CD8-positive, alpha-beta T cell (primary cell): ENCODE measurements at regions of chr1 and their contacts with region 1.

Region 1: DNA sequence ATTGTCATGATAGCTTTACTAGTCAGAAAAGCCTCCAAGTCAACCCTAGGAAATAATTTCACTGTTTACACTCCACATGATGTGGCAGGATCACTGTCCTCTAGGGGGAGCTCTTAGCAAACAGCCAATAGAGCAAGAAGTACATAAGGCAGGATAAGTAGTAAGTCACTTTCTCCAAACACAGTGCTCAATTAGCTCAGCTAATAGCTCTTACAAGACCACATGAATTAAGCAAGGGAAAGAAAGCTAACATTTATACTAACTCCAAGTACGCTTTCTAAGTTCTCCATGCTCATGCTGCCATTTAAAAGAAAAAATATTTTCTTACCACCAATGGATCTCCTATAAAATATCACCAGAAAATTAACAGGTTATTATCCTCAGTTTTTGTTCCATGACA is 66.9 kb upstream of the LRIF1 start:
- DNase-seq: peak in 8 of 9 experiments; percentile 37 to 74 (median 56)
- ATAC-seq: no peak
- H3K4me3 ChIP-seq: no peak overlapping the region
- H3K4me3 Mint-ChIP-seq: no peak overlapping the region
- H3K27ac ChIP-seq: no peak overlapping the region
- H3K27ac Mint-ChIP-seq: no peak overlapping the region
- H3K4me1 ChIP-seq: no peaks in the 10 kb centered on the region
- H3K4me1 Mint-ChIP-seq: no peaks in the 10 kb centered on the region
- H3K27me3 ChIP-seq: no peaks in the 10 kb centered on the region
- H3K27me3 Mint-ChIP-seq: peaks cover 9% of the 10 kb centered on the region
- CTCF ChIP-seq: peak; percentile 81

Region 2: GRCh38 chr1:111015225-111015624 is 15.4 kb before region 1 on chr1:
- CTCF ChIA-PET with region 1: interaction called, 26 read pairs
- POLR2A ChIA-PET with region 1: no interaction called
- intact Hi-C with region 1: no loop called
- DNase-seq: no peak
- ATAC-seq: no peak
- H3K4me3 ChIP-seq: no peak overlapping the region
- H3K4me3 Mint-ChIP-seq: no peak overlapping the region
- H3K27ac ChIP-seq: no peak overlapping the region
- H3K27ac Mint-ChIP-seq: no peak overlapping the region
- H3K4me1 ChIP-seq: no peaks in the 10 kb centered on the region
- H3K4me1 Mint-ChIP-seq: no peaks in the 10 kb centered on the region
- H3K27me3 ChIP-seq: peaks cover 0 to 8% of the 10 kb centered on the region in 2 experiments
- H3K27me3 Mint-ChIP-seq: peaks cover 28% of the 10 kb centered on the region
- CTCF ChIP-seq: no peak

Region 3: DNA sequence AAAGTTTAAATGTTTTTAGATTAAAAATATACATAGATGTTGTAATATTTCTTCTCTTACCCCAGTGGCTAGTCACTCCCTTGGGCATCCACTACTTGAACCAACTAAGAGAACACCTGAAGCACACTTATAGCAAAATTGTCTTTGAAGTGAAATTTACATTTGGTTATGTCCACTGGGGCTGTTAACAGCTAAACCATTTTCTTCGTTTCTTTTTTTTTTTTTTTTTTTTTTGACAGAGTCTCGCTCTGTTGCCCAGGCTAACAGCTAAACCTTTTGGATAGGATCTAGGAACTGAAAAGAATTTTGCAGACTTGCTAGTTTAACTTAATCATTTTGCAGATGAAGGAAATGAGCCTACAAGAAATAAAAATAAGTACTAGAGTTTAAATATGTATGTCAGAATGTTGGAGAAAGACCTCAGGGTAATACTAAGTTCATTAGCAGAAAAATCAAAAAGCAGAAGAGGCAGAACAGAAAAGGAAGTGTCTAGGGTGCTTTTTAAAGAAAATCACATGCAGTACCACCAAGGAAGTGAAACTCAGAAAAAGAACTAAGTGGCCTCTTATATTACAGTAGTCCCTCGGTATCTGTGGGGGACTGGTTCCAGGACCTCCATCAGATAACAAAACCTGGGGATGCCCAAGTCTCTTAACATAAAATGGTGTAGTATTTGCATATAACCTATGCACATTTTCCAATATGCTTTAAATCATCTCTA is 97.5 kb after region 1 on chr1:
- CTCF ChIA-PET with region 1: no interaction called
- POLR2A ChIA-PET with region 1: no interaction called
- intact Hi-C with region 1: loop called in 1 of 2 experiments (anchors 10 kb)
- DNase-seq: peak in 1 of 9 experiments; percentile 19
- ATAC-seq: no peak
- H3K4me3 ChIP-seq: no peak overlapping the region
- H3K4me3 Mint-ChIP-seq: peak overlapping the region; percentile 6
- H3K27ac ChIP-seq: no peak overlapping the region
- H3K27ac Mint-ChIP-seq: peak overlapping the region; percentile 58
- H3K4me1 ChIP-seq: peaks cover 4% of the 10 kb centered on the region
- H3K4me1 Mint-ChIP-seq: peaks cover 40% of the 10 kb centered on the region
- H3K27me3 ChIP-seq: no peaks in the 10 kb centered on the region
- H3K27me3 Mint-ChIP-seq: no peaks in the 10 kb centered on the region
- CTCF ChIP-seq: no peak

Region 4: GRCh38 chr1:111251570-111251969 is 221.0 kb after region 1 on chr1:
- CTCF ChIA-PET with region 1: no interaction called
- POLR2A ChIA-PET with region 1: no interaction called
- intact Hi-C with region 1: no loop called
- DNase-seq: peak in 5 of 9 experiments; percentile 21 to 62 (median 46)
- ATAC-seq: peak; percentile 89
- H3K4me3 ChIP-seq: no peak overlapping the region
- H3K4me3 Mint-ChIP-seq: peak overlapping the region; percentile 13
- H3K27ac ChIP-seq: no peak overlapping the region
- H3K27ac Mint-ChIP-seq: peak overlapping the region; percentile 88
- H3K4me1 ChIP-seq: peaks cover 16% of the 10 kb centered on the region
- H3K4me1 Mint-ChIP-seq: peaks cover 35% of the 10 kb centered on the region
- H3K27me3 ChIP-seq: no peaks in the 10 kb centered on the region
- H3K27me3 Mint-ChIP-seq: no peaks in the 10 kb centered on the region
- CTCF ChIP-seq: no peak

Region 5: DNA sequence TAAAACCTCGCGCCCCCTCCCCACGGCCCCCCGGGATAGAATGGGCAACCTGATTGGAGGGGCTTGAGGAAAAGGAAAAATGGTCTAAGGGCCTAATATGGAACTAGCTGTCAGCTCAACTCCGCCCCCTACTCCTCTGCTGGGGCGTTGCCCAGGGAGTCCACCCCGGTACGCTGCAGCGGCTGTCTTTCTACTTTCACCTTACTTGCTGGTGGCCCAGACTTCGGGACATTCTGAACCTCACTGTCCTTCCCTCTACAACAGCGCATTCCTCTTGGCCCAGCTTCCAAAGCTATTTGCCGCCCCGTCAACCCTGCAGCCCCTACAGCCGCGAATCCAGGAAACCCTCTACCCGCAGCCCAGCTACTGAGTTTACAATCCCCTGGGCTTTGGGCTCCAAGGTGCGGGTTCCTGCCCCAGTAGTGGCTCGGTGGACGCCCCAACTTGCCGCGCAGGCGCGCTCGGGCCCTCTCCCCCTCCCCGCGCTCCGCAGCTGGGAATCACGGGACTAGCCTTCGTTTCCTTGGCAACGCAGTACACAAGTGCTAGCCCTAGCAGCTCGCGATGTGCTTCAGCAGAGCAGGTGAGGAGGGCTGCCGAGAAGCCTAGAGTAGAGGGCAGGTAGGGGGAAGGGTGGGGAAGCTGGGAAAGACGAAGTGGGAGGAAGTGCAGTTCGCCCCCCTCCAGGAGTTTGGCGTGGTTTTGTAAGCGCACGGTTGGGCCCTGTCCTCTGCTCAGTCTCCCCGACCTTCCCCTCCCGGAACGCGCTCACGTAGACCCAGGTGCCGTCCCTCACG is 315.7 kb after region 1 on chr1:
- CTCF ChIA-PET with region 1: interaction called, 10 read pairs
- POLR2A ChIA-PET with region 1: no interaction called
- intact Hi-C with region 1: no loop called
- DNase-seq: peak; percentile 75 to 96 (median 87)
- ATAC-seq: peak; percentile 86
- H3K4me3 ChIP-seq: peak overlapping the region; percentile 67 to 68
- H3K4me3 Mint-ChIP-seq: peak overlapping the region; percentile 89
- H3K27ac ChIP-seq: peak overlapping the region; percentile 51 to 63
- H3K27ac Mint-ChIP-seq: peak overlapping the region; percentile 90
- H3K4me1 ChIP-seq: no peaks in the 10 kb centered on the region
- H3K4me1 Mint-ChIP-seq: peaks cover 23% of the 10 kb centered on the region
- H3K27me3 ChIP-seq: no peaks in the 10 kb centered on the region
- H3K27me3 Mint-ChIP-seq: no peaks in the 10 kb centered on the region
- CTCF ChIP-seq: no peak

Region 6: GRCh38 chr1:111441573-111442192 is 411.1 kb after region 1 on chr1:
- CTCF ChIA-PET with region 1: interaction called, 3 read pairs
- POLR2A ChIA-PET with region 1: interaction called, 3 read pairs
- intact Hi-C with region 1: loop called in 1 of 2 experiments (anchors 1 kb)
- DNase-seq: peak; percentile 42 to 80 (median 71)
- ATAC-seq: peak; percentile 97
- H3K4me3 ChIP-seq: no peak overlapping the region
- H3K4me3 Mint-ChIP-seq: no peak overlapping the region
- H3K27ac ChIP-seq: no peak overlapping the region
- H3K27ac Mint-ChIP-seq: peak overlapping the region; percentile 80
- H3K4me1 ChIP-seq: peaks cover 16% of the 10 kb centered on the region
- H3K4me1 Mint-ChIP-seq: peaks cover 42% of the 10 kb centered on the region
- H3K27me3 ChIP-seq: no peaks in the 10 kb centered on the region
- H3K27me3 Mint-ChIP-seq: no peaks in the 10 kb centered on the region
- CTCF ChIP-seq: peak; percentile 57